PC-9 (cell line): ENCODE measurements at regions of chr12 and their contacts with region 1.

Region 1: GRCh38 chr12:104958009-104958945 is at the start of gene SLC41A2:
- DNase-seq: peak; percentile 85 to 90
- H3K4me3 ChIP-seq: peak within 1 kb of the TSS; percentile 80
- H3K27ac ChIP-seq: peak within 1 kb of the TSS; percentile 51
- H3K4me1 ChIP-seq: peaks cover 31% of the 10 kb centered on the region
- H3K27me3 ChIP-seq: no peaks in the 10 kb centered on the region
- CTCF ChIP-seq: peak; percentile 34; the same call in 1 of the 2 replicates
- total RNA-seq, gene SLC41A2: 12.7 and 14.8 TPM in 2 replicates

Region 2: GRCh38 chr12:104263580-104264358 is 694.5 kb before region 1 on chr12:
- CTCF ChIA-PET with region 1: no interaction called
- POLR2A ChIA-PET with region 1: interaction called, 22 read pairs
- intact Hi-C with region 1: no loop called
- DNase-seq: no peak
- H3K4me3 ChIP-seq: no peak overlapping the region
- H3K27ac ChIP-seq: peak overlapping the region; percentile 23
- H3K4me1 ChIP-seq: peaks cover 13% of the 10 kb centered on the region
- H3K27me3 ChIP-seq: no peaks in the 10 kb centered on the region
- CTCF ChIP-seq: no peak

Region 3: GRCh38 chr12:104604070-104604994 is 353.9 kb before region 1 on chr12:
- CTCF ChIA-PET with region 1: no interaction called
- POLR2A ChIA-PET with region 1: no interaction called
- intact Hi-C with region 1: loop called (anchors 10 kb)
- DNase-seq: peak; percentile 77 to 90
- H3K4me3 ChIP-seq: peak overlapping the region; percentile 45; the same call in 1 of the 2 replicates
- H3K27ac ChIP-seq: peak overlapping the region; percentile 95
- H3K4me1 ChIP-seq: peaks cover 80% of the 10 kb centered on the region
- H3K27me3 ChIP-seq: no peaks in the 10 kb centered on the region
- CTCF ChIP-seq: no peak

Region 4: GRCh38 chr12:104671407-104672098 is 286.7 kb before region 1 on chr12:
- CTCF ChIA-PET with region 1: no interaction called
- POLR2A ChIA-PET with region 1: no interaction called
- intact Hi-C with region 1: loop called (anchors 10 kb)
- DNase-seq: peak; percentile 97
- H3K4me3 ChIP-seq: peak overlapping the region; percentile 13; the same call in 1 of the 2 replicates
- H3K27ac ChIP-seq: peak overlapping the region; percentile 98
- H3K4me1 ChIP-seq: peaks cover 79% of the 10 kb centered on the region
- H3K27me3 ChIP-seq: no peaks in the 10 kb centered on the region
- CTCF ChIP-seq: no peak

Region 5: DNA sequence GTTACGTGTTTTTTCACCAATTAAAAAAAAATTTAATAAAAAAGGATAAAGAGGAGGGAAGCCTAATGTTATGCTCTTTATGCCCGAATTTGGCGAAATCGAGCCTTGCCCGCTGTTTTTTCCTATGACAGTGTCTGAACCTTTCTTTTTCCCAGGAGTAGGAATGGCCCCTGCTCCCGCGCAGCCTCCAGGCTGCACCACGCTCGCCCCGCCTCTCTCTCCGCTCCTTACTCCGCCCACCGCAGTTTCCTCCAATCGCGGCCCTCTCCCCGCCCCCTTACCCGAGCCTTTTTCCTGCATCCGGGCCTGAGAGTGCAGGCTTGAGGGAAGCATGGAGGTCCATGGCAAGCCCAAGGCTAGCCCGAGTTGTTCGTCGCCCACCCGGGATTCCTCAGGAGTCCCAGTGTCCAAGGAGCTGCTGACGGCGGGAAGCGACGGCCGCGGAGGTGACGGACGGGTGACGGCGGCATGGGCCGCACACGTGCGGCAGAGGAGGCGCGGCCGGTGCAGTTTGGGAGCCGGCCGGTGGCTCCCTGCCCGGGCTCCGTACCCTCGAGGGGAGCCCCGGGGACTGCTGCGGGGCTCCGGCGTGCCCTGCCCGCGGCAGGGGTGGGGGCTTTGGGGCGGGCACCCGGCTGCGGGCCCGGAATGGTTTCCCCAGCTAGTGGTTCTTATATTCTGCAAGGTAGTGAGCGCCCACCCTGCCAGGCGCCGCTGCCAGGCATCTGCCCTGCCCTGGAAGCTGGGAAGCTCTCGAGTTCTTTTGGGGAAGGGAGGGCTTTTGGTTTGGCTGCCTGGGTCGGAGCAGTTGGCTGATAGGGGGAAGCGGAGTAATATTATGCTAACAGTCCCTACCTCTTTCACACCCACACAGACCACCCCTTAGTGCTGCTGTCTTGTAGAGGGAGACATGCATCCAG is 28.0 kb after region 1 on chr12 and contains the start of gene NOPCHAP1:
- CTCF ChIA-PET with region 1: no interaction called
- POLR2A ChIA-PET with region 1: no interaction called
- intact Hi-C with region 1: loop called (anchors 1 kb)
- DNase-seq: peak; percentile 68 to 91
- H3K4me3 ChIP-seq: peak within 1 kb of the TSS; percentile 74
- H3K27ac ChIP-seq: no peak within 1 kb of the TSS
- H3K4me1 ChIP-seq: peaks cover 22% of the 10 kb centered on the region
- H3K27me3 ChIP-seq: no peaks in the 10 kb centered on the region
- CTCF ChIP-seq: no peak
- total RNA-seq, gene NOPCHAP1: 20.1 and 21.7 TPM in 2 replicates

Region 6: DNA sequence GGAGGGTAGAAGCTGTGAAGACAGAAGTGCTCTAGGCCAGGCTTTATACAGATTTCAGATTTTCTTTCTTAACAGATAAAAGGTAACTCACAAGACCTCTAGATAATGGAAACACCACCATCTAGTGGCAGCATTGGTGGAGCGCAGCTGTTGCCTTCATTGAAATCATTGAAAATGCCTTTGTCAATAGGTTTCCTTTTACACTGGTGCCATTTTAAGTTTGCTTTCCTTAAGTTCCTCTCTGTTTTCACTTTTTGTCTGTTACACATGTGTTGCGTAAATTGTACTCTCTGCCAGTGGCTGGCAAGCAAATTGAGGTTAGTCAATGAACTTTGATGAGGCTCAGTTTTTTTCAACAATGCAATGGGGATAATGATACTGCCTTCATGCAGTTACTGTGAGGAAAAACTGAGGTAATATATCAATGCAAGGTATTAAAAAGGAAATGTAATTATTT is 94.9 kb after region 1 on chr12:
- CTCF ChIA-PET with region 1: no interaction called
- POLR2A ChIA-PET with region 1: no interaction called
- intact Hi-C with region 1: loop called (anchors 5 kb)
- DNase-seq: peak; percentile 65 to 70
- H3K4me3 ChIP-seq: no peak overlapping the region
- H3K27ac ChIP-seq: no peak overlapping the region
- H3K4me1 ChIP-seq: no peaks in the 10 kb centered on the region
- H3K27me3 ChIP-seq: no peaks in the 10 kb centered on the region
- CTCF ChIP-seq: peak; percentile 92